Sigmoid colon (tissue), 7 donors: ENCODE measurements at regions of chr2 and their contacts with region 1.

Region 1: GRCh38 chr2:108855194-108855593 is 68.6 kb downstream of the CCDC138 start:
- DNase-seq: no peak
- H3K4me3 ChIP-seq: no peak overlapping the region
- H3K27ac ChIP-seq: no peak overlapping the region
- H3K4me1 ChIP-seq: no peaks in the 10 kb centered on the region
- H3K27me3 ChIP-seq: no peaks in the 10 kb centered on the region
- CTCF ChIP-seq: peak in 1 of 4 experiments; percentile 14
- EP300 ChIP-seq: no peak
- POLR2A ChIP-seq: no peak

Region 2: GRCh38 chr2:108944601-108945331 is 89.6 kb after region 1 on chr2:
- intact Hi-C with region 1: loop called (anchors 10 kb)
- DNase-seq: no peak
- H3K4me3 ChIP-seq: no peak overlapping the region
- H3K27ac ChIP-seq: no peak overlapping the region
- H3K4me1 ChIP-seq: no peaks in the 10 kb centered on the region
- H3K27me3 ChIP-seq: no peaks in the 10 kb centered on the region
- CTCF ChIP-seq: no peak
- EP300 ChIP-seq: no peak
- POLR2A ChIP-seq: no peak

Region 3: DNA sequence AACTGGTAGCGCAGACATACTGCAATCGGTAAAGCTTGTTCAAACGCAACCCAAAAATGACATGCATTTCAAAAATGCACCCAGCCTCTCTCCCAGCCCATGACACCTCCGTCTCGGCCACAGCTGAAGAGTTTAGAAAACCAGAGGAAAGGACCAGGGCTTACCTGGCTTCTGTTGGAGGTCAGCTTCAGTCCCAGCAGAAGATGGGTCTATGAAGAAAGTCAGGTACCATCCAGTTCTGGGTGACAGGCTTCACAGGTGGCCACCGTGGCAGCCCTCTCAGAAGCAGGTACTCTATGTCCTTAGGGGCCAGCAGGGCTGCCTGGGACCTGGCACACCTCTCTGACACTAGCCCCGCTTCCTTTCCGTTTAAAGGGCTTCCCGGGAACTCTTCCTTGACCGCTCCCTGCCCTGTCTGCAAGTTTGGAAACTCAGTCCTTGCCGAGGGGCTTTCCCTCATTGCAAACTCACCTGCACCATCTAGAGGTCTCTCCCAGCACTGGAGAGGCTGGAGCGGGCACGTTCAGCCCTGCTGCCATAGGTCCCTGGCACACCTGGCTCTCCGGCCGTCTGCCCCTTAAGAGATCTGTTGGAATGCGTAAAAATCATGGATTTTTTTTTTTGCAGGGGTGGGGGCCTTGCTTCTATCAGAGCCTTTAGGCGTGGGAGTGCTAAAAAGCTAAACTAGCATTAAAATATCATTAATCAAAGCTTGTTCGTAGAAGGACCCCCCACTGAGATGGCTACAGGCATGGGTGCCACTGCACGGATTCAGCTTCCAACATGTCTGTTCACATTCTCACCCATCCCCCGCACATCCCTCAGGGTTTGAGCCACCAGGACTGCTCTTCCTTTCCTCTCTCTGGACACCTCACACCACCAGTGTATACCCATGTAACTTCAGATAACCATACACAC is 133.9 kb after region 1 on chr2 and contains the start of gene EDAR:
- intact Hi-C with region 1: loop called (anchors 5 kb)
- DNase-seq: no peak
- H3K4me3 ChIP-seq: no peak within 1 kb of the TSS
- H3K27ac ChIP-seq: no peak within 1 kb of the TSS
- H3K4me1 ChIP-seq: peaks cover 0 to 5% (median 0%) of the 10 kb centered on the region in 4 donors
- H3K27me3 ChIP-seq: peaks cover 3 to 24% (median 6%) of the 10 kb centered on the region in 3 donors
- CTCF ChIP-seq: peak in 1 of 4 experiments; percentile 31
- EP300 ChIP-seq: no peak
- POLR2A ChIP-seq: no peak
- total RNA-seq, gene EDAR: not detected